Upper lobe of right lung (tissue), 1 donor: ENCODE measurements at regions of chr5 and their contacts with region 1.

Region 1: GRCh38 chr5:37837414-37838032 is 2.3 kb downstream of the GDNF start:
- DNase-seq: peak; percentile 81
- ATAC-seq: peak; percentile 74
- H3K4me3 ChIP-seq: peak overlapping the region; percentile 29
- H3K27ac ChIP-seq: no peak overlapping the region
- H3K4me1 ChIP-seq: peaks cover 35% of the 10 kb centered on the region
- H3K27me3 ChIP-seq: peaks cover 98% of the 10 kb centered on the region
- CTCF ChIP-seq: peak; percentile 62

Region 2: DNA sequence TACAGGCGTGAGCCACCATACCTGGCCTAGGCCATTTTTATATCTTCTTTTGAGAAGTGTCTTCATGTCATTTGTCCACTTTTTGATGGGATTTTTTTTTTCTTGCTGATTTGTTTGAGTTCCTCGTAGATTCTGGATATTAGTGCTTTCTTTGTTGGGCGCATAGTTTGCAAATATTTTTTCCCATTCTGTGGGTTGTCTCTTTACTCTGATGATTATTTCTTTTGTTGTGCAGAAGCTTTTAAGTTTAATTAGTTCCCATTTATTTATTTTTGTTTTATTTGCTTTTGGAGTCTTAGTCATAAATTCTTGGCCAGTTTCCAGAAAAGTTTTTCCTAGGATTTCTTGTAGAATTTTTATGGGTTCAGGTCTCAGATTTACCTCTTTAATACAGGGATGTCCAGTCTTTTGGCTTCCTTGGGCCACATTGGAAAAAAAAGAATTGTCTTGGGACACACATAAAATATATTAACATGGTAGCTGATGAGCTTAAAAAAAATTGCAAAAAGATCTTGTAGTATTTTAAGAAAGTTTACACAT is 336.4 kb before region 1 on chr5:
- intact Hi-C with region 1: no loop called
- DNase-seq: no peak
- ATAC-seq: no peak
- H3K4me3 ChIP-seq: no peak overlapping the region
- H3K27ac ChIP-seq: no peak overlapping the region
- H3K4me1 ChIP-seq: no peaks in the 10 kb centered on the region
- H3K27me3 ChIP-seq: no peaks in the 10 kb centered on the region
- CTCF ChIP-seq: no peak

Region 3: GRCh38 chr5:38193015-38193581 is 355.6 kb after region 1 on chr5:
- intact Hi-C with region 1: loop called (anchors 10 kb)
- DNase-seq: peak; percentile 80
- ATAC-seq: peak; percentile 91
- H3K4me3 ChIP-seq: no peak overlapping the region
- H3K27ac ChIP-seq: no peak overlapping the region
- H3K4me1 ChIP-seq: no peaks in the 10 kb centered on the region
- H3K27me3 ChIP-seq: peaks cover 19% of the 10 kb centered on the region
- CTCF ChIP-seq: peak; percentile 88